ENCODE measurements at regions of chr6 and their contacts with region 1.

Region 1: GRCh38 chr6:105282631-105283585 is 103.1 kb upstream of the POPDC3 start:
- DNase-seq: no peak
- ATAC-seq: no peak
- H3K4me3 ChIP-seq: no peak overlapping the region
- H3K27ac ChIP-seq: no peak overlapping the region
- H3K4me1 ChIP-seq: no peaks in the 10 kb centered on the region
- H3K27me3 ChIP-seq: no peaks in the 10 kb centered on the region
- CTCF ChIP-seq: no peak
- POLR2A ChIP-seq: no peak
- RAD21 ChIP-seq: no peak

Region 2: DNA sequence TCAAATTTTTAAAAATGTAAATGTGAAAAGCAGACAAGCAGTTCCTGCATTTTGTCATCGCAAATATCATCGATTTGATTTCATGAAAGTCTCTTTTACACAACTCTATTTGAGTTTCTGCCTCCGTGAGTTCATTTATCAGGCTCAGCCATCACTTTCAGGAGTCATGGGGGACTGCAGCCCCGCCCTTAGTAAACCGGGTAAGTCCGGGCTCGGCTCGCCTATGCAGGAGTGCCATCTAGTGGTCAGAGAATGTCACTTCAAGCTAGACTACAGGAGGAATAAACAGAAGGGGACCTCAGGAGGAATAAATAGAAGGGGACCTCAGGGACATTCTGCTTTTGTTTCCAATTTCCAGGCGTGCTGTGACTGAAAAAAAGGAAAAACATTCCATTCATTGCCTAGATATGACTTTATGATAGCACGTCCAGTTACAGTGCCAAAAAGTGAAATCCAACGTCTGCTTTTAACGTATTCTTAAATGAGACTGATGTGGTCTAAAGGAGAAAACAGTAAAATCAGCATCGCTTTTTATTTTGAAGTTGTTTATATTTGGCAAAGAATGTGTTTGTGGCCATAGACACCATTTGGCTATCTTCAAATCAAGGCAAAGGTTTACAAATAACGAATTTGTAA is 757.1 kb before region 1 on chr6:
- CTCF ChIA-PET with region 1: no interaction called
- POLR2A ChIA-PET with region 1: no interaction called
- dilution Hi-C with region 1: no loop called
- in situ Hi-C with region 1: no loop called
- intact Hi-C with region 1: no loop called
- DNase-seq: peak; percentile 64
- ATAC-seq: peak; percentile 100
- H3K4me3 ChIP-seq: peak overlapping the region; percentile 10; the same call in 1 of the 2 replicates
- H3K27ac ChIP-seq: no peak overlapping the region
- H3K4me1 ChIP-seq: no peaks in the 10 kb centered on the region
- H3K27me3 ChIP-seq: peaks cover 8% of the 10 kb centered on the region; the same call in 1 of the 2 replicates
- CTCF ChIP-seq: peak; percentile 85
- POLR2A ChIP-seq: no peak
- RAD21 ChIP-seq: peak; percentile 88

Region 3: DNA sequence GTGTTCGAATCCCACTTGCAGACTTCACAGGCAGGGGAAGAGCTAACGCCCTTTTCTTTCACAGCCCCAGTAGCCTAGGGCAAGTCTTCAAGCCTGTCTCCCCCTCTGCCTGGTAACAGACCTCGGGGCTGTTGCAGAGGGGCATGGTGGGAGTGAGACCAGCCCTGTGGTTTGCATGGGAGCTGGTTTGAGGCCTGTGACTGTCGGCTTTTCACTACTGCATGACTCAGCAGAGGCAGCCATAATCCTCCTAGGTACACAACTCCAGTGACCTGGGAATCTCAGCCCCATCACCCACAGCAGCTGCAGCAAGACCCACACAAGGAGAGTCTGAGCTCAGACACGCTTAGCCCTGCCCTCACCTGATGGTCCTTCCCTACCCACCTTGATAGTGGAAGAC is 47.8 kb before region 1 on chr6:
- CTCF ChIA-PET with region 1: no interaction called
- POLR2A ChIA-PET with region 1: no interaction called
- dilution Hi-C with region 1: no loop called
- in situ Hi-C with region 1: no loop called
- intact Hi-C with region 1: loop called (anchors 1 kb)
- DNase-seq: no peak
- ATAC-seq: no peak
- H3K4me3 ChIP-seq: no peak overlapping the region
- H3K27ac ChIP-seq: no peak overlapping the region
- H3K4me1 ChIP-seq: no peaks in the 10 kb centered on the region
- H3K27me3 ChIP-seq: peaks cover 3% of the 10 kb centered on the region
- CTCF ChIP-seq: no peak
- POLR2A ChIP-seq: no peak
- RAD21 ChIP-seq: no peak

Region 4: DNA sequence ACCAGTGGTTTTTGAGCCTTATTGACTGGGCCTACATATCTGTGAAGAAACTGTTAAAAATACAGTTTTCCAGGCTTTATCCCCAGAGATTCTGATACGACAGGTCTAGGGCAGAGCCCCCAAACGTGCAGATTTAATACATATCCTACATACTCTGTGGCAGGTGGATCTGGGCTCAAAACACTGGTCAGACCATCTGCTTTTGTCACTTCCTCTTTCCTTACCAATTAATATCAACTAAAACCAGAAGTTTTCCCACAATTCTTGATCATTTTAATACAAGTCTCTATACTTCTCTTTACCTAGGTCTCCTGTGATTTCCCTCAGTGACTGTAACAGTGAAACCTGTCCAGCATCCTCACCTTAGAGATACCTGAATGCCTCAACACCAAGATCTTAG is 11.2 kb after region 1 on chr6:
- CTCF ChIA-PET with region 1: no interaction called
- POLR2A ChIA-PET with region 1: no interaction called
- dilution Hi-C with region 1: no loop called
- in situ Hi-C with region 1: no loop called
- intact Hi-C with region 1: no loop called
- DNase-seq: no peak
- ATAC-seq: no peak
- H3K4me3 ChIP-seq: no peak overlapping the region
- H3K27ac ChIP-seq: no peak overlapping the region
- H3K4me1 ChIP-seq: no peaks in the 10 kb centered on the region
- H3K27me3 ChIP-seq: no peaks in the 10 kb centered on the region
- CTCF ChIP-seq: no peak
- POLR2A ChIP-seq: no peak
- RAD21 ChIP-seq: no peak

Region 5: GRCh38 chr6:105452924-105453756 is 170.2 kb after region 1 on chr6:
- CTCF ChIA-PET with region 1: no interaction called
- POLR2A ChIA-PET with region 1: no interaction called
- dilution Hi-C with region 1: no loop called
- in situ Hi-C with region 1: no loop called
- intact Hi-C with region 1: no loop called
- DNase-seq: no peak
- ATAC-seq: no peak
- H3K4me3 ChIP-seq: no peak overlapping the region
- H3K27ac ChIP-seq: no peak overlapping the region
- H3K4me1 ChIP-seq: no peaks in the 10 kb centered on the region
- H3K27me3 ChIP-seq: no peaks in the 10 kb centered on the region; the same call in none of the 2 replicates
- CTCF ChIP-seq: no peak
- POLR2A ChIP-seq: no peak
- RAD21 ChIP-seq: no peak